ENCODE measurements at regions of chr5 and their contacts with region 1.

Region 1: GRCh38 chr5:159915904-159916840 is at the start of gene ADRA1B:
- DNase-seq: peak; percentile 53
- ATAC-seq: peak; percentile 90
- H3K4me3 ChIP-seq: peak within 1 kb of the TSS; percentile 40
- H3K27ac ChIP-seq: no peak within 1 kb of the TSS; the same call in 1 of the 2 replicates
- H3K4me1 ChIP-seq: peaks cover 16% of the 10 kb centered on the region
- H3K27me3 ChIP-seq: no peaks in the 10 kb centered on the region
- CTCF ChIP-seq: peak; percentile 83
- POLR2A ChIP-seq: 0 out of 2 replicates have a peak, but pooled peaks have one; percentile 22
- RAD21 ChIP-seq: peak; percentile 91
- total RNA-seq, gene ADRA1B: 0.18 and 0.56 TPM in 2 replicates

Region 2: DNA sequence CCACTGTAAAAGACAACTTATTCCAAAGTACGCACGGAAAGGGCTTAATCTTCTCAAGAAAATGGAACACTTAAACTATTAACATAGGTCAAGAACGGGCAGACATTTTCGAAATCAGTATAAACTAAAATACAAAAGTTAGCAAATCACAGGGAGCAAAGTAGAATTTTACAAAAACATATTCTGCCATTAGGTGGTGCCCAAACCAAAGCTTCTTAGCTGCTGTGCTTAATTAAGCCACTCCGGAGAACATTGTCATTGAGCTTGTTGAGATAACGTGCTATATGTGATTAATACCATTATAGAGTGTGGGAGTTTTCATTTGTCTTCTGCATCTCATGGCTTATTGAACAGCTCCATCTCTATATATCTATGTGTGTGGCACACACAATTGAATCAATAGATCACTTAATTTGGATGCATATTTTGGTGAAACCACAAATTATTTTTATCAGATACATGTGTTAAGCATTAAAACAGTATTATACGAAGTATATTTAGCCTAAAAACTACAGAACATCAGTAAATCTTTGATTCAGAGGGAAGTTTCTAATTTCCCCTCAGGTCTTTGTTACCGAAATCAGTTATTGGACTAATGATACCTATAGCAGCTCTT is 629.6 kb before region 1 on chr5:
- CTCF ChIA-PET with region 1: no interaction called
- POLR2A ChIA-PET with region 1: no interaction called
- dilution Hi-C with region 1: no loop called
- in situ Hi-C with region 1: no loop called
- intact Hi-C with region 1: loop called (anchors 1 kb)
- DNase-seq: peak; percentile 48
- ATAC-seq: peak; percentile 53; the same call in 1 of the 2 replicates
- H3K4me3 ChIP-seq: no peak overlapping the region
- H3K27ac ChIP-seq: no peak overlapping the region
- H3K4me1 ChIP-seq: no peaks in the 10 kb centered on the region
- H3K27me3 ChIP-seq: no peaks in the 10 kb centered on the region
- CTCF ChIP-seq: peak; percentile 56
- POLR2A ChIP-seq: no peak
- RAD21 ChIP-seq: peak; percentile 77

Region 3: DNA sequence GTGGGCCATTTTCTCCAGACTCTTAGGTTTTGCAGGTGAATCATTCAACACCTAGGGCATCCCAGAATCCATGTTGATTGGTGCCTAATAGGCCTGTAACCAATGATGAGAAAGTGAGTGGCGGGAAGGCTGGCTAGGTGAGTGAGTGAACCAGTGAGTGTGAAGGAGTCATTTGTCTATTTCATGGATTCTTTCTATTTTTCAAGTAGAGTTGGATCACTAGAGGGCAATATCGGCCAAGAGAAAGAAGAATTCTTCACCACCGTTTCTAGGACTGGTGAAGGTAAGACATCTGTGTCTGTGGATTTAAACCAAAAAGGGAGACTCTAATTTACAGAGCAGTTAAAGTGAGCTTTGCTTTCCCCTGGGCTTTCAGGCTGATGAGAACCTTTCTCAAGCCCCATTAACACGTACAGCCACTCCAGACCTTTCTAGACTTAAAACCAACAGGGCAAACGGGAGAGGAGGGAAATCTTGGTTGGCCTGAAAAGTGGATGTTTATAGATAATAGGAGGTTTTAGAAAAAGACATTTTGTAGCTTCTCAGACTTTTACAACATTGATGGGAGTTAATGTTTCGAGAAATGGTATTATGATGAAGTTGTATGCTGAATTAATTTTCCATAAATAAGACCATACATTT is 471.6 kb before region 1 on chr5:
- CTCF ChIA-PET with region 1: interaction called, 9 read pairs
- POLR2A ChIA-PET with region 1: no interaction called
- dilution Hi-C with region 1: no loop called
- in situ Hi-C with region 1: loop called (anchors 5 kb)
- intact Hi-C with region 1: loop called (anchors 1 kb)
- DNase-seq: peak; percentile 69
- ATAC-seq: peak; percentile 82
- H3K4me3 ChIP-seq: no peak overlapping the region
- H3K27ac ChIP-seq: no peak overlapping the region
- H3K4me1 ChIP-seq: peaks cover 3% of the 10 kb centered on the region; the same call in 1 of the 2 replicates
- H3K27me3 ChIP-seq: no peaks in the 10 kb centered on the region
- CTCF ChIP-seq: peak; percentile 79
- POLR2A ChIP-seq: no peak
- RAD21 ChIP-seq: peak; percentile 86

Region 4: GRCh38 chr5:159515909-159516415 is 400.2 kb before region 1 on chr5:
- CTCF ChIA-PET with region 1: no interaction called
- POLR2A ChIA-PET with region 1: no interaction called
- dilution Hi-C with region 1: no loop called
- in situ Hi-C with region 1: no loop called
- intact Hi-C with region 1: loop called (anchors 5 kb)
- DNase-seq: peak; percentile 42
- ATAC-seq: 0 out of 2 replicates have a peak, but pooled peaks have one; percentile 48
- H3K4me3 ChIP-seq: no peak overlapping the region
- H3K27ac ChIP-seq: no peak overlapping the region
- H3K4me1 ChIP-seq: peaks cover 5% of the 10 kb centered on the region
- H3K27me3 ChIP-seq: peaks cover 4% of the 10 kb centered on the region
- CTCF ChIP-seq: peak; percentile 69
- POLR2A ChIP-seq: no peak
- RAD21 ChIP-seq: peak; percentile 69

Region 5: DNA sequence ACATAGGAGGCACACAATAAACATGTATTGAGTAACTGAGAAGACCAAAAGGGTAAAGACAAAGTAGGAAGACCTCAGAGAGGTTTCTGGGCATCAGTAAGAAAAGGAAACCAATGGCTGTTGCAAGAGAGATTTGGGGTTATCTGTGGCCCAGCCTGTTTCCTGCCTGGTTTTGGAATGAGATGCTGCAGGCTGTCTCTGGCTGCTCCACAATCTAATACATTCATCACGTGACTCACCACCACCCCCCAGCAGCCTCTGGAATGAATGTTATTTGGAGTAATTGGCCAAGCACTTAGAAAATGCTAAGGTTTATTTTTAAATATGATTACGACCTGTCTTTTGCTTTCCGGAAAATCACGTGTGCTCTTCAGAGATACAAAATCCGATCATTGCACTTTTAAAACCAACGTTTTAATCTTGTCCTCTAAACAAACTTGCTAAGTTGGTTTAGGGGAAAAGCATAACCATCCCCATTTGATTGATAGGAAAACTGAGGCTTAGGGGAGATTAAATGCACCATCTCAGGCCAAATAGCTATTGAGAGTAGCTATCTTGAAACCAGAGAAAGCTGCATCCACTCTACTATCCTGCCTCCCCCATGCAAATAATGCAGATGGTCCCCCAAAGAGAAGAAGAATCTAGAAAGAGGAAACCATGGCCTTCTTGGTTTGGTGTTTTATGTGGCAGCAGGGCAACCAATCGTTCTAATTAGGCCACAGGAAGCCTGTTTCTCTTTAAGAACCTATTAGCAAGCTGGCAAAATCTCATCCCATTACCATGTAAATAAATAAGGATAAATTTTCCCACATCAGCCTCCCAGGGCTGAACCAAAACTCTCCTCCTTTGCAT is 151.7 kb before region 1 on chr5:
- CTCF ChIA-PET with region 1: no interaction called
- POLR2A ChIA-PET with region 1: no interaction called
- dilution Hi-C with region 1: no loop called
- in situ Hi-C with region 1: no loop called
- intact Hi-C with region 1: loop called (anchors 5 kb)
- DNase-seq: peak; percentile 94
- ATAC-seq: peak; percentile 82
- H3K4me3 ChIP-seq: no peak overlapping the region
- H3K27ac ChIP-seq: peak overlapping the region; percentile 95
- H3K4me1 ChIP-seq: peaks cover 19% of the 10 kb centered on the region
- H3K27me3 ChIP-seq: no peaks in the 10 kb centered on the region
- CTCF ChIP-seq: no peak
- POLR2A ChIP-seq: no peak
- RAD21 ChIP-seq: no peak

Region 6: DNA sequence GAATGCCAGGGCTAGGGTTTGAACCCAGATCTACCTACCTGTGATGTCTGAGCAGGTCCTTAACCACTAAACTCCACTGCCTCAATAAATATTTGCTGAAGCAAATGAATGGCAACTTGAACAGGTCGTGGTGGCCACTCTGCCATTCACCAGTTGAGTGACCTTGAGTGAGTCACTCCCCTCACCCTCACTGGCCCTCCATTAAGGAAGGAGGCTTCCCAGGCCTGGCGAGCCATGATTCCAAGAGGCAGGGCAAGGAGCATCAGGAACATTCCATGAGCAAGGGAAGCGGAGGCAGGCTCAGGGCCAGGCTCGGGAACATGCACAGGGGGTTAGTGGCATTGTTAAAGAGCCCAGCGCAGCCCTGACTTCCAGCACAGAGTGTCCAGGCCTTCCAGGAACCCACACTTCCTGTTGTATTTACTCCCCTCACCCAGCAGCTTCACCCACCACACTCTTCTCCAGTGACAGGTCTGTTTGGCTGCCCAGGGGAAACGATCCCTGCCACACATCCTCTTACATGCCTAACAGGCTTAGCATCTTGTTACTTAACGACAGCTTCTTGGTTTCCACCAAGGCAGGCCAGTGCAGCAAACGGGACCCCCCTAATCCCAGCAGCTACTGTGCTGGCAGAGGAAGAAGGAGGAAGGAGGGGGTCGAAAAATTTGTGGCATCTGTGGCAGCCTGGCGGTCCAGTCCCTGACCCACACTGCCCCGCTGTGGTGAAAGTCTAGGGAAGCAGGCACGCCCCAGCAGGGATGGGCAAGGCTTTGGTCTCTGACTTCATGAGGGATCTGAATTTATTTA is 49.1 kb after region 1 on chr5:
- CTCF ChIA-PET with region 1: interaction called, 5 read pairs
- POLR2A ChIA-PET with region 1: interaction called, 3 read pairs
- dilution Hi-C with region 1: no loop called
- in situ Hi-C with region 1: no loop called
- intact Hi-C with region 1: loop called (anchors 2 kb)
- DNase-seq: peak; percentile 57
- ATAC-seq: peak; percentile 96
- H3K4me3 ChIP-seq: no peak overlapping the region
- H3K27ac ChIP-seq: no peak overlapping the region
- H3K4me1 ChIP-seq: peaks cover 5% of the 10 kb centered on the region
- H3K27me3 ChIP-seq: no peaks in the 10 kb centered on the region
- CTCF ChIP-seq: peak; percentile 71
- POLR2A ChIP-seq: no peak
- RAD21 ChIP-seq: peak; percentile 85

Region 7: DNA sequence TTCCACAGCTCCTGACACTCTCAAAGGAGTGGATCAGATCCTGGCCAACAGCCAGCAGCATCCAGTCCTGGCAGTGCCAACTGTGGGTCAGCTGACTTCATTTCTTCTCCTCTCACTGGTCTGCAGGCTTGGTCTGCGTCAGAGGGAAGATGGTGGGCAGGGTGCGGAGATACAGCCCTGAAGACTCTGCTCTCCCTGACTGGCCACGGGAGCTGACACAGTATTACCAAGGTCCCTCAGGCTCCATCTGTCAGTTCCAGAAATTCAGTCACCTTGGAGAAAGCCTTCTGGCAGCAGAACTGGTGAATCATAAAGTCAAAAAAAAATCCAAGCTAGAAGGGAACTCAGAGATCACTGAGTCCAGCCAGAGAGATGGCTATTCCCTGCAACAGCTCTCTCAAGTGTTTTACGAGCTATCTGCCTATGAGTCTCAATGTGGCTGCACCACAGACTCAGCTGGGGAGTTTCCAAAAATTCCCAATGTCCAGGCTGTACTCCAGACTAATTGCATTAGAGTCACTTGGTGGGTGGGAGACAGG is 426.3 kb after region 1 on chr5:
- CTCF ChIA-PET with region 1: no interaction called
- POLR2A ChIA-PET with region 1: no interaction called
- dilution Hi-C with region 1: no loop called
- in situ Hi-C with region 1: no loop called
- intact Hi-C with region 1: loop called (anchors 1 kb)
- DNase-seq: peak; percentile 61
- ATAC-seq: no peak
- H3K4me3 ChIP-seq: no peak overlapping the region
- H3K27ac ChIP-seq: no peak overlapping the region
- H3K4me1 ChIP-seq: peaks cover 2% of the 10 kb centered on the region; the same call in 1 of the 2 replicates
- H3K27me3 ChIP-seq: no peaks in the 10 kb centered on the region
- CTCF ChIP-seq: no peak
- POLR2A ChIP-seq: no peak
- RAD21 ChIP-seq: no peak